Calu3 (cell line): ENCODE measurements at regions of chr20 and their contacts with region 1.

Region 1: GRCh38 chr20:33211817-33212424 is 5.2 kb upstream of the BPIFA3 start:
- DNase-seq: peak; percentile 85
- H3K4me3 Mint-ChIP-seq: no peak overlapping the region
- H3K27ac Mint-ChIP-seq: no peak overlapping the region
- H3K4me1 Mint-ChIP-seq: peaks cover 8% of the 10 kb centered on the region
- H3K27me3 Mint-ChIP-seq: peaks cover 100% of the 10 kb centered on the region
- CTCF ChIP-seq: peak; percentile 72

Region 2: DNA sequence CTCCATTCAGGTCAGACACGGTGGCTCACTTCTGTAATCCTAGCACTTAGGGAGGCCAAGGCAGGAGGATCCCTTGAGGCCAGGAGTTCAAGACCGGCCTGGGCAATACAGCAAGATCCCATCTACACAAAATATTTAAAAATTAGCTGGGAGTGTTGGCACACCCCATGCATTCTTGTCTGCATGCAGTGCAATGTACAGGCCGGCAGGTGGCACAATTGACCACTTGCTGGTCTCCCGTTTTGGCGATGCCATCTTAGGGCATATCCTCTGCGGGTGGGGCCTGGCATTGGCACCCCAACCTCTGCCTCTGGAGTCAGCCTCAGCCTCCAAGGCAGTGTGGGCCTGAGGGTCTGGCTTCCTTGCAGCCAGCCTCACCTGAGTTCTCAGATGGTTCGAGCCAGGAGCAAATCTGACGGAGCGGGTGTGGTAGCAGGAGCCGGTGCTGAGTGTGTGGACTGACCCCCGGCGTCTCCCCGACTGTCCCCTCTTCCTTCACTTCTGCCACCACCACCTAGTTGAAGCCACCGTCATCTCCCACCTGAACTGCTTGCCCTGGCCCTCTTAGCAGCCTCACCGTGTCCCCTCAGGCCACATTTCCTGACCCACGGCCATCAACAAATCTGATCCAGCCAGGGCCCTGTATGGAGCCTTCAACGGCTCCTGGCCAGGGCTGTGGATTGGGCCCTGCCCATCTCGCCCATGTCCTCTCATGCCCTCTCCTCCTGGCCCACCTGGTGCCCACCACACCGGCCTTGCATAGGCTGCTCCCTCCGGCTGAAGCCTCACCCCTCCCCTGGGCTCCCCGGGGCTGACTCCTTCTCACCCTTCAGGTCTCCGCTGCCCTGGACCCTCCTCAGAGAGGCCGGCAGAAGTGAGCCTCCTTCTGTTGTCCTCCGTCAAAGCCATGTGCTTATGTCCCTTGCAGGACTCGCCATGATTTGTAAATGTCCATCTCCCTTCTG is 309.2 kb before region 1 on chr20:
- CTCF ChIA-PET with region 1: no interaction called
- intact Hi-C with region 1: loop called (anchors 2 kb)
- DNase-seq: peak; percentile 75
- H3K4me3 Mint-ChIP-seq: no peak overlapping the region
- H3K27ac Mint-ChIP-seq: no peak overlapping the region
- H3K4me1 Mint-ChIP-seq: no peaks in the 10 kb centered on the region
- H3K27me3 Mint-ChIP-seq: peaks cover 28% of the 10 kb centered on the region
- CTCF ChIP-seq: peak; percentile 97

Region 3: GRCh38 chr20:33249456-33249855 is 37.5 kb after region 1 on chr20:
- CTCF ChIA-PET with region 1: no interaction called
- intact Hi-C with region 1: no loop called
- DNase-seq: no peak
- H3K4me3 Mint-ChIP-seq: no peak overlapping the region
- H3K27ac Mint-ChIP-seq: no peak overlapping the region
- H3K4me1 Mint-ChIP-seq: no peaks in the 10 kb centered on the region
- H3K27me3 Mint-ChIP-seq: peaks cover 36% of the 10 kb centered on the region
- CTCF ChIP-seq: no peak

Region 4: DNA sequence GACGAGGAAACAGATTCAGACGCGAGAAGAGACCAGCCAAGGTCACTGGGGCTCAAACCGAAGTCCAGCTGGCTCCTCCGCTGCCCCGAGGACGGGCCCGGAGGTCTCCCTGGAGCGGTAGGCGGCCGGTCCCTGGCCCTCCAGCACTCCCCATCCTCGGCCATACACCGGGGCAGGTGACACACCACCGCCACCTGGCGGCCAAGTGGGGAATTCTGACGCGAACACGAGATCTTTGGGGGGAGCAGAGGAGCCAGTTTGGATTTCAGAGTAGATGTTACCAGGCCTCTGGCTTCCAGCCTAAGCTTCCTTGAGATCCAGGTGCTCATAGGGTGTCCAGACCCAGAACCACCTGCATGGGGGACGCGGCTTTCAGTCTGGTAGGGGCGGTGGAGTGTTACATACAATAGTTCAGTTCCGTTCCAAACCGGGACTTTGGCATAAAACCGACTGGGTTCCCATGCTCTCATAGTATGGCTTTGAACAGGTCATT is 87.2 kb after region 1 on chr20:
- CTCF ChIA-PET with region 1: no interaction called
- intact Hi-C with region 1: loop called (anchors 1 kb)
- DNase-seq: peak; percentile 93
- H3K4me3 Mint-ChIP-seq: peak overlapping the region; percentile 10
- H3K27ac Mint-ChIP-seq: no peak overlapping the region
- H3K4me1 Mint-ChIP-seq: peaks cover 5% of the 10 kb centered on the region
- H3K27me3 Mint-ChIP-seq: peaks cover 63% of the 10 kb centered on the region
- CTCF ChIP-seq: peak; percentile 99

Region 5: DNA sequence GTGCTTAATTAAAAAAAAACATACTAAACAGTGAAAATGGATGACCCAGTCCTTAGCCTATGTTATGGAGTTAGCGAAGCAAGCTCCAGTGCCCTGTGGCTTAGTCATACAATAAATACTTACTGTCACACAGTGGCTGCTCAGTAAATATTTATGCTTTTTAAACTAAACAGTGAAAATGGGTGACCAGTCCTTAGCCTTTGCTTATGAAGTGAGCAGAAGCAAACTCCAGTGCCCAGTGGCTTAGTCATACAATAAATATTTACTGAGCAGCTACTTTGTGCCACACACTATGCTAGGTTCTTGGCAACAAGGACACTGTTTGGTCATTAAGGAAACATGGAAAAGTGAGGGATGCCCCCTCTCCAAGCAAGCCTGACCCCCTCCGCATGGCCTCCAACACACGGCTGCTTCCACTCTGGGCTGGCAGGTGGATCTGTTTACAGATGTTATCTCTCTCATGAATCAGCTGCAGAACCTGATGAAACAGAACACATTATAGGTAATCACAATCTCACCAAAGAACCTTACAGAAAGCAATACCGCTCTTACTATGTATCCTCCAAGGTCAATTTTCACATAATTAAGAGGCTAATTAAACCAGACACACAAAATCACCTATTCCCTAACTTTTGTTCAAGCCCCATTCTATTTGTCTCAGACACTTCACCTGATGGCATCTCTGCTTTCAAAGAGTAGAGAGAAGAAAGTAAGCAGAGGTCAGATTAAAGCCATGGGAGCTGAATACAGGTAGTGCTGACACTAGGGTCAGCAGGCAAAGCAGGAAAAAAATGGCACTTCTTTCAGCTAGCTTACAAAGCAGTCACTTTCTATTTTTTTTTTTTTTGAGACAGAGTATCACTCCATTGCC is 162.0 kb after region 1 on chr20:
- CTCF ChIA-PET with region 1: no interaction called
- intact Hi-C with region 1: no loop called
- DNase-seq: peak; percentile 29
- H3K4me3 Mint-ChIP-seq: no peak overlapping the region
- H3K27ac Mint-ChIP-seq: peak overlapping the region; percentile 45
- H3K4me1 Mint-ChIP-seq: peaks cover 26% of the 10 kb centered on the region
- H3K27me3 Mint-ChIP-seq: no peaks in the 10 kb centered on the region
- CTCF ChIP-seq: no peak

Region 6: GRCh38 chr20:34199183-34199582 is 987.3 kb after region 1 on chr20:
- CTCF ChIA-PET with region 1: interaction called, 11 read pairs
- intact Hi-C with region 1: no loop called
- DNase-seq: no peak
- H3K4me3 Mint-ChIP-seq: no peak overlapping the region
- H3K27ac Mint-ChIP-seq: no peak overlapping the region
- H3K4me1 Mint-ChIP-seq: no peaks in the 10 kb centered on the region
- H3K27me3 Mint-ChIP-seq: peaks cover 45% of the 10 kb centered on the region
- CTCF ChIP-seq: no peak